ENCODE measurements at regions of chr3 and their contacts with region 1.

Region 1: GRCh38 chr3:25664810-25665314 is at the start of gene TOP2B:
- DNase-seq: peak; percentile 97
- ATAC-seq: peak; percentile 99
- total RNA-seq, gene TOP2B: 90.3 TPM

Region 2: DNA sequence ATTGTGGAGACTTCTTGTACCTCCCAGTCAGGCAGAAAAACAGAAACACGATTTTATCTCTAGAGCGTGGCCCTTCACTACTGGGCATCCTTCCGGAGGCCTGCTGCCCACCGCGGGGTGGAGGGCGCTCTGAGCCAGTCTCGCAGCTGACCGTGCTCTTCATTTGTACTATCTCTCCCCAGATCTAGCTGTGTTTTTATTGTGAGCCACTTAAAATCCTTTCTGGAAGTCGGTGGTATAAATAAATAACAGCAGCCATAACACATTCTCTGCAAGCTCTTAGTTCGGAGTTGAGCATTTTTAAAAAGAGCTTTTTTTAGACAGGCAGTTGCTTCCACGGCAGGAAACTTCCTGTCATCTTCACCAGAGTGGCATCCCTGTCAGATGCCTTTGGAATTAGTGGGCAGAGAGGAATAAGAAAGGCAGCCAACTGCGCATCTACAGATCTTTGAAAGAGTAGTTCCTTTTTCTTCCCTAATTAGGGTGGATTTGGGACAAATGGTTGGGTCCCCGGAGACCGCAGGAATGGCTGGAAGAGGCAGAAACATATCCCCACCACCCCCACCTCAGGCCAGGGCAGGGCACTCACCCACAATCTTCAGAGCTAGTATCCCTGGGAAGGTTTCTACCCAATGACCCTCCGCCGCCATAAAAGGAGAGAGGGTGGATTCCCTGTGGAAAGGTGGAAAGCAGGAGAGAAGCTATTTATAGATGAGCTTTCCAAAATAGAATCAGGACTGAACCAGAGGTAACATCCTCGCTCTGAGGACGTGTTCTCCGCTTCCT is 91.3 kb before region 1 on chr3:
- intact Hi-C with region 1: no loop called
- DNase-seq: no peak
- ATAC-seq: peak; percentile 27

Region 3: GRCh38 chr3:25782938-25783660 is 118.2 kb after region 1 on chr3 and contains the start of gene NGLY1:
- intact Hi-C with region 1: loop called (anchors 5 kb)
- DNase-seq: peak; percentile 95
- ATAC-seq: peak; percentile 98
- total RNA-seq, gene NGLY1: 35.9 TPM

Measured in Right ventricle myocardium inferior (tissue), 1 donor.